Lower lobe of right lung (tissue), 2 donors: ENCODE measurements at regions of chr9 and their contacts with region 1.

Region 1: GRCh38 chr9:123544007-123544827 is 188.2 kb downstream of the CRB2 start:
- DNase-seq: no peak
- ATAC-seq: peak in 1 of 2 donors; percentile 54
- H3K4me3 ChIP-seq: no peak overlapping the region
- H3K27ac ChIP-seq: no peak overlapping the region
- H3K4me1 ChIP-seq: no peaks in the 10 kb centered on the region
- H3K27me3 ChIP-seq: no peaks in the 10 kb centered on the region
- CTCF ChIP-seq: peak; percentile 81

Region 2: DNA sequence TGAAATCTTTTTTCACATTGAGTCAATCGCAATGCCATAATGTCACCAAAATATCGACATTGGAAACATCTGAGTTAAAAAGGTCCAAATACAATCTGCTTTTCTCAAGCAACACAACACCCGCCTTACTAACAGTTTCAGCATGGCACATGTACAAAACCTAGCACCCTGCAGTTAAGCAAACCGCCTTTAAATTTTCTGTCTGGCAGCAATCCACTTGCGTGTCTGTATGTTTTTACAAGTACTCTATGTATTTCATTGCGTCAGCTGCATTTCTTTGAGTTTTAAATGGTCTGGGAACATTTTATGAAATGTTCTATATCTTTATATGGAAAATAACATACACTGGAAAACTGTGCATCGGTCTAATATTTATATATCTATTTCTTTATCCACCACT is 251.1 kb after region 1 on chr9:
- intact Hi-C with region 1: no loop called
- DNase-seq: no peak
- ATAC-seq: no peak
- H3K4me3 ChIP-seq: no peak overlapping the region
- H3K27ac ChIP-seq: no peak overlapping the region
- H3K4me1 ChIP-seq: no peaks in the 10 kb centered on the region
- H3K27me3 ChIP-seq: no peaks in the 10 kb centered on the region
- CTCF ChIP-seq: no peak

Region 3: DNA sequence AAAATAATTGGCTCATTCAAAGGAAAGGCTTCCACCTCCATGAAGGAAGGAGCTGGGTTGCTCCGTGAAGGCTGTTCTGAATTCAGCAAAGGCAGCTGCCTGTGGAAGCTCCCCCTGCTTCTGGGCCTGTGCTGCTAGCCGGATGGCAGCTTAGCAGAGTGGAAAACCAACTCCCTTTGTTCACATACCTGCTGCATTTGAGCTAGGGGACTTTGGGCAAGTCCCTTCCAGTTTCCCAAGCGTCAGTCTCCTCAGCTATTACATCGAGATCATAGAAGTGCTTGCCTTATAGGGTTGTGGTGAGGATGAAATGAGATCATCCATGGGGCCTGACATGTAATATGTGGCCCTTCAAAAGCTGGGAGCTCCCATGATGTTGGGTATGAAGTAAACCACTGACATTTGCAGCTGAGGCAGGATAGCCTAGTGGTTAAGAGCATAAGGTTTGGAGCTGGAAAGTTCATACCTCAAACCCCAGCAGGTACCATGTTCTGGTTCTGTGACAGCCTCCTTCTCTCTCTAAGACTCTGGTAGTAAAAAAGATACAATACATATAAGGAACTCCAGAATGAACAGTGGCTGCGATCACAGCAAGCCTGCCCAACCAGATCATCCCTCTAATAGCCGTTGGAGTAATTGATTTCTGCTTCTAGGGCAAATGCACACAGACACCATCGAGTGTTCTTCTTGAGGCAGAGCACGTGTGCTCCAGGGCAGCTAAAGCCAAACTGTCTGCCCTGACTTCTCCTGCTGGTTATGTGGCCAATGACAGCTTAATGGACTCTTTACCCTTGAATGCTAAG is 396.7 kb after region 1 on chr9:
- intact Hi-C with region 1: no loop called
- DNase-seq: no peak
- ATAC-seq: no peak
- H3K4me3 ChIP-seq: no peak overlapping the region
- H3K27ac ChIP-seq: no peak overlapping the region
- H3K4me1 ChIP-seq: no peaks in the 10 kb centered on the region
- H3K27me3 ChIP-seq: peaks cover 22% of the 10 kb centered on the region
- CTCF ChIP-seq: no peak

Region 4: GRCh38 chr9:124037779-124038178 is 493.6 kb after region 1 on chr9:
- intact Hi-C with region 1: loop called (anchors 10 kb)
- DNase-seq: no peak
- ATAC-seq: no peak
- H3K4me3 ChIP-seq: no peak overlapping the region
- H3K27ac ChIP-seq: no peak overlapping the region
- H3K4me1 ChIP-seq: peaks cover 15% of the 10 kb centered on the region
- H3K27me3 ChIP-seq: peaks cover 96% of the 10 kb centered on the region
- CTCF ChIP-seq: no peak